Adrenal gland (tissue), 19 donors: ENCODE measurements at regions of chr6 and their contacts with region 1.

Region 1: DNA sequence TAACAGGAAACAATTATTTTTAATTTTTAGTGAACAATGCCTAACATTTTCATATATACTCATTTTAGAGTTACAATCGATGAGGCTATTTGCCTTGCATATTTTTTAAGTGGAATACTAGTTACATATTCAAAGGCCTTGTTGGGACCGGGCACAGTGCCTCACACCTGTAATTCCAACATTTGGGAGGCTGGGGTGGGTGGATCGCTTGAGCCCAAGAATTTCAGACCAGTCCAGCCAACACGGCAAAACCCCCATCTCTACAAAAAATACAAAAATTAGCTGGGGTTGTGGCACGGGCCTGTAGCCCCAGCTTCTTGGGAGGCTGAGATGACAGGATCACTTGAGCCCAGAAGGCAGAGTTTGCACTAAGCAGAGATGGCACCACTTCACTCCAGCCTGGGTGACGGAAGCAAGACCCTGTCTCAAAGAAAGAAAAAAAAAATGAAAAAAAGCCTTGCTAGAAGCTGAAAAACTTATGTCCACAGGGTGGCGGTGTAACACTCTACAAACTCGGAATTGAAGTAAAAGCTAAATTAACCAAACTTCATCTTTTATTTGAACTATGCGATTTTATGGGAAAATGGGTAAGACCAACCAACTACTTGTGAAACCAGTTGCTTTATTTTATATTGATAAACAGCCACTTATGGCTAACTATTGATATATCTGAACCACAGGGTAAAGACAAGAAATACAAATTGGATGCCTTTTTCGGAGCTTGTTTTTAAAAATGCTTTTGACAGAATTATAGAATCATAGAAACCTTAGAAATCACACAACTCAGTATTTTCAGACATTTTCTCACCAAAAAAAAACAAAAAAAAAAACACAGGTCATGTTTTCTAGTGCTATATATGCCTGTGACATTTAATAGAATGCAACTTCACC is 24.1 kb upstream of the ROS1 start:
- DNase-seq: peak; percentile 30 to 79 (median 59)
- H3K4me3 ChIP-seq: no peak overlapping the region
- H3K27ac ChIP-seq: no peak overlapping the region
- H3K4me1 ChIP-seq: no peaks in the 10 kb centered on the region
- H3K27me3 ChIP-seq: peaks cover 6% of the 10 kb centered on the region
- CTCF ChIP-seq: peak; percentile 58 to 87 (median 78)
- POLR2A ChIP-seq: no peak

Region 2: GRCh38 chr6:116246089-116246488 is 1203.7 kb before region 1 on chr6:
- intact Hi-C with region 1: no loop called
- DNase-seq: peak in 4 of 7 donors; percentile 27 to 49 (median 41)
- H3K4me3 ChIP-seq: no peak overlapping the region
- H3K27ac ChIP-seq: peak overlapping the region in 4 of 5 donors; percentile 27 to 61 (median 46)
- H3K4me1 ChIP-seq: peaks cover 15 to 52% of the 10 kb centered on the region in 2 donors
- H3K27me3 ChIP-seq: no peaks in the 10 kb centered on the region
- CTCF ChIP-seq: no peak
- POLR2A ChIP-seq: no peak

Region 3: GRCh38 chr6:117555882-117556498 is 106.2 kb after region 1 on chr6:
- intact Hi-C with region 1: loop called (anchors 5 kb)
- DNase-seq: peak; percentile 23 to 76 (median 57)
- H3K4me3 ChIP-seq: no peak overlapping the region
- H3K27ac ChIP-seq: no peak overlapping the region
- H3K4me1 ChIP-seq: no peaks in the 10 kb centered on the region
- H3K27me3 ChIP-seq: no peaks in the 10 kb centered on the region
- CTCF ChIP-seq: peak; percentile 72 to 94 (median 80)
- POLR2A ChIP-seq: no peak